Gastrocnemius medialis (tissue), 4 donors: ENCODE measurements at regions of chr9 and their contacts with region 1.

Region 1: GRCh38 chr9:68584189-68585033 is 43.7 kb upstream of the TMEM252 start:
- DNase-seq: peak; percentile 61 to 71
- ATAC-seq: peak; percentile 92 to 98
- H3K4me3 ChIP-seq: no peak overlapping the region
- H3K27ac ChIP-seq: no peak overlapping the region
- H3K4me1 ChIP-seq: no peaks in the 10 kb centered on the region
- H3K27me3 ChIP-seq: peaks cover 0 to 4% (median 0%) of the 10 kb centered on the region in 3 donors
- CTCF ChIP-seq: peak; percentile 86 to 97 (median 88)
- POLR2A ChIP-seq: no peak

Region 2: DNA sequence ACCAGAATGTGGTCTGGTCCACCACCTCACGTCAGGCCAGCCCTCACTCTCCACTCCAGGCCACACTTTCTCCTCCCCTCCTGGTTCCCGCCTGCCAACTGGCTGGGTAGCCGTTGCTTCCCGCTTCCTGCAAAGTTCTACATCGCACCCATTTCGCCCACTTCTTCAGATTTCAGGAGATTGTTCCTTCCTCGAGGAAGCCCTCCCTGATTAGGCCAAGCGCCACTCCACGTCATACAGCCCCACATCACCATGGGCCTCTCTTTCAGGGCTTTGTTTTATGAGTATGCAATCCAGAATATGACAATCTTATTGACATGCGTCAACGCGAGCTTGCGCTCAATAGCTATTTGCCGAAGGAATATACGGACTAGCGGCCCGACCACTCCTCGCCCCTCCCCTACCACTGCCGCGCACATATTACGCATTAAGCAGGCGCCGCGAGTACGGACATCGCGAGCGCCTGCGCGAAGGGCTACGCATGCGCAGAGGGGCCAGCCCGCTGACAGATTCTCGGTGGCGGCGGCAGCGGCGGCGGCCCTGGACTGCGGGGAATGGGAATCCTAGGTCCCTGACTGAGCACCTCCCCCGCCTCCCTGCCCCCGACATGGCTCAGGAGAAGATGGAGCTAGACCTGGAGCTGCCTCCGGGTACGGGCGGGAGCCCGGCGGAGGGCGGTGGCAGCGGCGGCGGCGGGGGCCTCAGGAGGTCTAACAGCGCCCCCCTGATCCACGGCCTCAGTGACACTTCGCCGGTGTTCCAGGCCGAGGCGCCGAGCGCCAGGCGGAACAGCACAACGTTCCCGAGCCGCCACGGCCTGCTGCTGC is 195.4 kb after region 1 on chr9:
- in situ Hi-C with region 1: loop called in 1 of 4 experiments (anchors 25 kb)
- intact Hi-C with region 1: loop called (anchors 2 kb)
- DNase-seq: peak; percentile 87 to 91
- ATAC-seq: peak; percentile 87 to 89
- H3K4me3 ChIP-seq: peak overlapping the region; percentile 88 to 93 (median 91)
- H3K27ac ChIP-seq: peak overlapping the region; percentile 87 to 96 (median 93)
- H3K4me1 ChIP-seq: peaks cover 51 to 69% of the 10 kb centered on the region in 2 donors
- H3K27me3 ChIP-seq: no peaks in the 10 kb centered on the region
- CTCF ChIP-seq: peak in 4 of 5 experiments; percentile 25 to 41 (median 38)
- POLR2A ChIP-seq: peak; percentile 84 to 87

Region 3: GRCh38 chr9:68844631-68845612 is 260.5 kb after region 1 on chr9:
- in situ Hi-C with region 1: loop called in 2 of 4 experiments (anchors 25 kb)
- intact Hi-C with region 1: loop called (anchors 10 kb)
- DNase-seq: no peak
- ATAC-seq: no peak
- H3K4me3 ChIP-seq: no peak overlapping the region
- H3K27ac ChIP-seq: no peak overlapping the region
- H3K4me1 ChIP-seq: peaks cover 7 to 13% of the 10 kb centered on the region in 2 donors
- H3K27me3 ChIP-seq: no peaks in the 10 kb centered on the region
- CTCF ChIP-seq: peak; percentile 12 to 55 (median 40)
- POLR2A ChIP-seq: no peak

Region 4: GRCh38 chr9:68999393-69000105 is 415.1 kb after region 1 on chr9:
- in situ Hi-C with region 1: loop called (anchors 5 to 10 kb)
- intact Hi-C with region 1: loop called (anchors 1 kb)
- DNase-seq: peak; percentile 27 to 48
- ATAC-seq: peak; percentile 66 to 92
- H3K4me3 ChIP-seq: no peak overlapping the region
- H3K27ac ChIP-seq: no peak overlapping the region
- H3K4me1 ChIP-seq: no peaks in the 10 kb centered on the region
- H3K27me3 ChIP-seq: no peaks in the 10 kb centered on the region
- CTCF ChIP-seq: peak in 4 of 5 experiments; percentile 44 to 79 (median 62)
- POLR2A ChIP-seq: no peak